Heart right ventricle (tissue), 16 donors: ENCODE measurements at regions of chr10 and their contacts with region 1.

Region 1: GRCh38 chr10:14822879-14823755 is 14.7 kb downstream of the CDNF start:
- DNase-seq: peak in 1 of 2 donors; percentile 23
- ATAC-seq: peak in 3 of 8 donors; percentile 49 to 51 (median 49)
- H3K4me3 ChIP-seq: no peak overlapping the region
- H3K27ac ChIP-seq: no peak overlapping the region
- H3K4me1 ChIP-seq: peaks cover 0 to 8% (median 0%) of the 10 kb centered on the region in 9 donors
- H3K27me3 ChIP-seq: no peaks in the 10 kb centered on the region
- CTCF ChIP-seq: peak; percentile 22 to 77 (median 66)

Region 2: DNA sequence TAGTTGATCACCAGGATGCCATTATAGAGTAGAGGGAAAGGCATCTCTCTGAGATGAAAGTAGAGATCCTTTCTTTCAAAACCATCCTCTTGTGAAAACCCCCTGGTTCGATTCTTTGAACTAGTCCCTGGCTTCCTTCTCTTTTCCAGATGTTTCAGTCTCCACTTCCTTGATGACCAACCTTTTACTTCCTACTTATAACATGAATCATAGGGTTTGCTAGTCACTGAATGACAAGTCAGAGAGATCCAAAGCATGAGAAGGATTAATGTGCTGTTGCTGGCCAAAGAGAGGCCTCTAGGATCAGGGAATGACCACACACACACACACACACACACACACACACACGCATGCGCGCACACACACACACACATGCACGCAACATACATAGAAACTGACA is 331.3 kb before region 1 on chr10:
- intact Hi-C with region 1: loop called in 5 of 10 experiments (anchors 5 to 10 kb)
- DNase-seq: no peak
- ATAC-seq: no peak
- H3K4me3 ChIP-seq: no peak overlapping the region
- H3K27ac ChIP-seq: no peak overlapping the region
- H3K4me1 ChIP-seq: no peaks in the 10 kb centered on the region
- H3K27me3 ChIP-seq: peaks cover 0 to 25% (median 6%) of the 10 kb centered on the region in 7 donors
- CTCF ChIP-seq: no peak

Region 3: DNA sequence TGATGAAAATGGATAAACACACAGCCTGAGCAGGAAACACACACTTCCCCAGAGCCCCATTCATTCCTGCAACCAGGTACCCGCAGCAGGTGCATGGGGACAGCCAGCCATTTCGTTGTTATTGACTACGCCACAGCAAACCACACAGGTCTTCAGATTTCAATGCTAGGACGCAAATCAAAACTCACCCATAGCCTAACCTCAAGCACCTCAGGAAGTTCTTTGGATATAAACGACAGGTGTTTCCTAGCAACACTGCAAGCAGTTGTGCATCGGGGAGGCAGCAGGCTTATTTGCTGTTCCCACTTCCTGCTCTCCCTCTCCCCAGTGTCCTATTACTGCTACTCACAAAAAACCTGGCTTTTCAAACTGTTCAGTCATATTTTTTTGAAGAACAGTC is 315.9 kb before region 1 on chr10:
- intact Hi-C with region 1: loop called in 2 of 10 experiments (anchors 5 to 10 kb)
- DNase-seq: no peak
- ATAC-seq: no peak
- H3K4me3 ChIP-seq: no peak overlapping the region
- H3K27ac ChIP-seq: no peak overlapping the region
- H3K4me1 ChIP-seq: no peaks in the 10 kb centered on the region
- H3K27me3 ChIP-seq: no peaks in the 10 kb centered on the region
- CTCF ChIP-seq: no peak

Region 4: GRCh38 chr10:14543046-14543903 is 279.8 kb before region 1 on chr10:
- intact Hi-C with region 1: loop called in 9 of 10 experiments (anchors 5 to 10 kb)
- DNase-seq: peak in 1 of 2 donors; percentile 37
- ATAC-seq: peak; percentile 44 to 88 (median 79)
- H3K4me3 ChIP-seq: no peak overlapping the region
- H3K27ac ChIP-seq: peak overlapping the region in 8 of 10 donors; percentile 4 to 79 (median 42)
- H3K4me1 ChIP-seq: peaks cover 0 to 46% (median 8%) of the 10 kb centered on the region in 9 donors
- H3K27me3 ChIP-seq: no peaks in the 10 kb centered on the region
- CTCF ChIP-seq: peak in 6 of 9 donors; percentile 18 to 53 (median 39)

Region 5: GRCh38 chr10:14648005-14648765 is 174.9 kb before region 1 on chr10:
- intact Hi-C with region 1: no loop called
- DNase-seq: peak; percentile 39 to 89
- ATAC-seq: peak; percentile 80 to 98 (median 97)
- H3K4me3 ChIP-seq: peak overlapping the region in 1 of 10 donors; percentile 31
- H3K27ac ChIP-seq: peak overlapping the region; percentile 24 to 83 (median 67)
- H3K4me1 ChIP-seq: peaks cover 0 to 29% (median 11%) of the 10 kb centered on the region in 9 donors
- H3K27me3 ChIP-seq: no peaks in the 10 kb centered on the region
- CTCF ChIP-seq: no peak

Region 6: DNA sequence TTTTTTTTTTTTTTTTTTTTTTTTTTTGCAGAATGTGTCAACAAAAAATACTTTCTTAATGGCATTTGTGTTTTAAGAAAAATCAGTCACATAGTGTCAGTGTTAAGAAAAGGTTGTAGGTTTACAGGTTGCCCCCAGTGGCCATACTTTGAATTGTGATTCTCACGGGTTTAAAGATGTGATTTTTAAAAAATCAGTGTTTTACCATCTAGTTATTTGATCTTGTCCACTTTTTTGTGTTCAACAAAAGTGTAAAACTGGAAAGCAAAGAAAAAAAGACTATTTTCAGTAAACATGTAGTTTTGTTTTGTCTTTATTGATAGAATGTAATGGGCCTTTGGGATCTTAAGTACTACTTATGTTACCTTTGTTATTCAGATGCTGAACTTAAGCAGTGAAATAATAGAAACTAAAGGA is 81.2 kb after region 1 on chr10:
- intact Hi-C with region 1: no loop called
- DNase-seq: no peak
- ATAC-seq: no peak
- H3K4me3 ChIP-seq: no peak overlapping the region
- H3K27ac ChIP-seq: no peak overlapping the region
- H3K4me1 ChIP-seq: no peaks in the 10 kb centered on the region
- H3K27me3 ChIP-seq: no peaks in the 10 kb centered on the region
- CTCF ChIP-seq: peak; percentile 19 to 60 (median 53)